ENCODE measurements at regions of chr17 and their contacts with region 1.

Region 1: GRCh38 chr17:43778337-43779144 is at the start of gene DUSP3:
- H3K4me3 ChIP-seq: peak within 1 kb of the TSS; percentile 85
- H3K27ac ChIP-seq: peak within 1 kb of the TSS; percentile 93
- H3K4me1 ChIP-seq: no peaks in the 10 kb centered on the region
- CTCF ChIP-seq: no peak

Region 2: GRCh38 chr17:43626023-43626422 is 152.5 kb before region 1 on chr17:
- CTCF ChIA-PET with region 1: interaction called, 10 read pairs
- POLR2A ChIA-PET with region 1: no interaction called
- H3K4me3 ChIP-seq: no peak overlapping the region
- H3K27ac ChIP-seq: no peak overlapping the region
- H3K4me1 ChIP-seq: peaks cover 7% of the 10 kb centered on the region
- CTCF ChIP-seq: no peak